ENCODE measurements at regions of chrX and their contacts with region 1.

Region 1: DNA sequence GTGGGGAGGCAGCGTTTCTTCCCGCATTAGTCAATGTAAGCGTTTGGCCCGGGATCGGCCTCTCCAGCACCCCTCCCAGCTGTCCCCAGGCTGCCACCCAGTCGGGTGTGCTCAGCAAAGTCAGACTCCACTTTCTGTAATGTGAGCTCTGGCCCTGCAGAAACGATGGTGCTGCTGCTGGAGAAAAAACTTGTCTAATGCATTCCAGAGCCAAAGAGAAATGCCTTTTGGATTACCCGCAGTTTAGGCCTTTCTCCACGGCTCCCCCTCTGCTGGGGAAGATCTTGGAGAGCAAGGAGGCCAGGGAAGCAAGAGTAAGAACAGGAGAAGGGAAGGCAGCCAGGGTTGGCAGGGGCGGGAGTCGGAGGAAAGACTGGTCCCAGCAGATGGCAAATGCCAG is 55.2 kb downstream of the ELF4 start:
- DNase-seq: no peak
- H3K4me3 ChIP-seq: no peak overlapping the region
- H3K27ac ChIP-seq: peak overlapping the region in 2 of 4 donors; percentile 40 to 54
- H3K4me1 ChIP-seq: peaks cover 0 to 6% (median 2%) of the 10 kb centered on the region in 4 donors
- H3K27me3 ChIP-seq: no peaks in the 10 kb centered on the region
- CTCF ChIP-seq: no peak
- EP300 ChIP-seq: no peak
- POLR2A ChIP-seq: no peak

Region 2: DNA sequence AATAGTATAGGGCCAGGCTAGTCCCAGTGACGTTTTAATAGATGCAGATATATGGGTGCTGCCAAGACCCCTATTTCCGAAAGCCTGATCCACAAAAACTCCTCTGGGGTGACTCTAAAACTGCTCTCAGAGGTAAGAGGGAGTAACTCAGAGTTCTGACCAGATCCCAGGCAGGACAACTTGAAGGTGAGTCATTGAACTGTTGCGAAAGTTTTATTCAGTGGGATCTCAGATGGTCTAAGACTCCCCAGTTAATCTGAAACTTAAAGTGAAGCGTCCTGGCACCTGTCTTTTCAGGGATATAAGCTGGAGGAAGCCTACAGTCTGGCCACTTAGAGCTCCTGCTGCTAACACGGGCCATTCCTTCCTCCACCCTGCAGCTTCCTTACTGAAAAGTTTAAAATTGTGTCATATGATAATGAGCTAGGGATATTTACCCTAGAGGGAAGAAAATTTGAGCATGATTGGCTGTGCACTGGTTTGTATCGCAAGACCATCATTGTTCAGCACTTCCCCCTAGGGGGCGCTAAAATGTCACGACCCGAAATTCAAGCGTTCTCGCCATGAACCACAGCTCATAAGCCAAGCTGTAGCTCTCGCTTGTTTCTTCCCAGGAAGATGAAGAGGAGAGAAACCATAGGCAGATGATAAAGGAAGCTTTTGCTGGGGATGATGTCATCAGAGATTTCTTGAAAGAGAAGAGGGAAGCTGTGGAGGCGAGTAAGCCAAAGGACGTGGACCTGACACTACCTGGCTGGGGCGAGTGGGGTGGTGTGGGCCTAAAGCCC is 129.6 kb before region 1 on chrX:
- in situ Hi-C with region 1: loop called in 1 of 4 experiments (anchors 10 kb)
- intact Hi-C with region 1: no loop called
- DNase-seq: peak; percentile 75
- H3K4me3 ChIP-seq: no peak overlapping the region
- H3K27ac ChIP-seq: no peak overlapping the region
- H3K4me1 ChIP-seq: no peaks in the 10 kb centered on the region
- H3K27me3 ChIP-seq: no peaks in the 10 kb centered on the region
- CTCF ChIP-seq: peak; percentile 56 to 65 (median 63)
- EP300 ChIP-seq: no peak
- POLR2A ChIP-seq: no peak

Region 3: DNA sequence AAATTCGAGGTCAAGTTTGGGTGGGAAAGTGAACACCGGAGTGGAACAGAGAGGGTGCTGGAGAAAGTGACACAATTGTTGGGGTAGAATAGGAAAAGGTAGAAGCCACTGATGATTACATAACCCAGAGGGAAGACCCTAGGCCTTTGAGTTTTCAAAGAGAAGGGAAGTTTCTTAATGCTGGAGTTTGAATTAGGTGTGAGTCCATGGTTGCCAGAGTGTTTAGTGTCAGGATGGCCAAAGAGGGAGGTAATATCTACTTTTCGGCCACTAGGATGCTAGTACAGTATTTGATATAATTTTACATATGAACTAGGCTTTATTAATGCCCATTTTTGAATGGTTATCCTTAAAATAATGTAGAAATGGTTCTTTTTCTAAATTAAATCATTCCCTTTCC is 67.2 kb before region 1 on chrX:
- in situ Hi-C with region 1: no loop called
- intact Hi-C with region 1: no loop called
- DNase-seq: no peak
- H3K4me3 ChIP-seq: no peak overlapping the region
- H3K27ac ChIP-seq: no peak overlapping the region
- H3K4me1 ChIP-seq: no peaks in the 10 kb centered on the region
- H3K27me3 ChIP-seq: no peaks in the 10 kb centered on the region
- CTCF ChIP-seq: no peak
- EP300 ChIP-seq: no peak
- POLR2A ChIP-seq: no peak

Region 4: GRCh38 chrX:130444641-130445336 is 389.7 kb after region 1 on chrX:
- in situ Hi-C with region 1: no loop called
- intact Hi-C with region 1: no loop called
- DNase-seq: no peak
- H3K4me3 ChIP-seq: no peak overlapping the region
- H3K27ac ChIP-seq: no peak overlapping the region
- H3K4me1 ChIP-seq: no peaks in the 10 kb centered on the region
- H3K27me3 ChIP-seq: no peaks in the 10 kb centered on the region
- CTCF ChIP-seq: no peak
- EP300 ChIP-seq: no peak
- POLR2A ChIP-seq: no peak